ENCODE measurements at regions of chr20 and their contacts with region 1.

Region 1: DNA sequence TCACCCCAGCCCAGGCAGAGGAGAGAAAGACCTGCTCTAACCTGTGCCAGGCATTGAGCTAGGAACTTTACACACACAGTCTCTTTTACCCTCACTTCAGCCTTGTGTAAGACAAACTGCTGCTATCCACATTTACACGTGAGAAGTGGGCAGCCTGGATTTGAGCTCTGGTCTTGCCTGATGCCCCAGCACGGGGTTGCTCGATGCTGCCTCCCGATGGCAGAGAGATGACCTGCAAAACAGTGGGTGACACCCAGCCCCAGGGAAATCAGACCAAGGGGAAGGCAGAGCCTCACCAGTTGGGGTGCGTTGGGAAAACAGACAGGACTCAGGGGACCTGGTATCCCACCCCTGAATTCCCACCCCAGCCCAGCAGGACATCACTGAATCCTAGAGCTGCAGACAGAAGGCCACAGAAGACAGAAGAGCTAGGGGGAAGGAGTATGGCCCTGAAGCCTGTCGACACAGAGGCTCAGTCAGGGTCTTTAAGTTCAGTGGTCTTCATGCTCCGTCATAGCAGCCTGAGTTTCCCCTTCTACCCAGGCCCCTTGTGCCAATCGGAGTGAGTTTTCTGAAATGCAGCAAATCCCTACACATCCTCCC is 990 bp downstream of the BPI start:
- DNase-seq: no peak
- H3K4me3 ChIP-seq: no peak overlapping the region
- H3K27ac ChIP-seq: no peak overlapping the region
- H3K4me1 ChIP-seq: peaks cover 0 to 12% (median 3%) of the 10 kb centered on the region in 4 donors
- H3K27me3 ChIP-seq: peaks cover 0 to 51% (median 2%) of the 10 kb centered on the region in 4 donors
- CTCF ChIP-seq: peak; percentile 12 to 48 (median 31)
- EP300 ChIP-seq: no peak
- POLR2A ChIP-seq: no peak

Region 2: DNA sequence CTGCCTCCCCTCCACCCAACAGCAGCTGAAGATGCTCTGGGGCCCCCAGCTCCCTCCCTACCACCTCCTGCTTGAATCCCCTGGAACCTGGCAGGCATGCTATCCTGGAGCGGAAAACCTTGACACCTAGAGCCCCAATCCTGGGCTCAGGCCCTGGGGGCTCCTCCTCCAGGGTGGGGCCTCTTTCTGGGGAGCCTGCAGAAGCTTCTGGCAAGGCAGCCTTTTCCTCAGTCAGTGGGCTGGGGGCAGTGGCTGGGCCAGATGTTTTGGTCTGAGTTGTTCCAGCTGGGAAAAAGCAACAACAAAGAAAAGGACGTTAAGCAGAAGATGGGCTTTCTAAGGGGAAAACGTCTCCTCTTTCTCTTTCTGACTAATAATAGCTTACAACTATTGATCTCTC is 65.5 kb before region 1 on chr20:
- intact Hi-C with region 1: loop called (anchors 5 kb)
- DNase-seq: no peak
- H3K4me3 ChIP-seq: no peak overlapping the region
- H3K27ac ChIP-seq: no peak overlapping the region
- H3K4me1 ChIP-seq: peaks cover 0 to 6% (median 3%) of the 10 kb centered on the region in 4 donors
- H3K27me3 ChIP-seq: peaks cover 0 to 3% (median 0%) of the 10 kb centered on the region in 4 donors
- CTCF ChIP-seq: no peak
- EP300 ChIP-seq: no peak
- POLR2A ChIP-seq: no peak

Region 3: GRCh38 chr20:38357653-38358207 is 52.8 kb after region 1 on chr20:
- intact Hi-C with region 1: no loop called
- DNase-seq: no peak
- H3K4me3 ChIP-seq: no peak overlapping the region
- H3K27ac ChIP-seq: no peak overlapping the region
- H3K4me1 ChIP-seq: peaks cover 0 to 4% (median 0%) of the 10 kb centered on the region in 4 donors
- H3K27me3 ChIP-seq: no peaks in the 10 kb centered on the region
- CTCF ChIP-seq: no peak
- EP300 ChIP-seq: no peak
- POLR2A ChIP-seq: no peak

Measured in esophagus muscularis mucosa (tissue), 4 donors.